ENCODE measurements at regions of chr9 and their contacts with region 1.

Region 1: GRCh38 chr9:109440797-109441287 is 57.3 kb downstream of the PTPN3 start:
- DNase-seq: no peak
- ATAC-seq: peak; percentile 89
- H3K4me3 ChIP-seq: no peak overlapping the region
- H3K27ac ChIP-seq: no peak overlapping the region
- H3K4me1 ChIP-seq: peaks cover 19% of the 10 kb centered on the region
- H3K27me3 ChIP-seq: no peaks in the 10 kb centered on the region
- CTCF ChIP-seq: peak; percentile 73 to 86 (median 85)
- EP300 ChIP-seq: 0 out of 4 replicates have a peak, but pooled peaks of 1 of the 2 experiments have one; percentile 28
- POLR2A ChIP-seq: no peak
- RAD21 ChIP-seq: peak; percentile 84

Region 2: GRCh38 chr9:109213290-109214121 is 227.3 kb before region 1 on chr9:
- CTCF ChIA-PET with region 1: no interaction called
- POLR2A ChIA-PET with region 1: no interaction called
- RAD21 ChIA-PET with region 1: no interaction called
- SMC1A ChIA-PET with region 1: no interaction called
- in situ Hi-C with region 1: no loop called
- intact Hi-C with region 1: no loop called
- DNase-seq: no peak
- ATAC-seq: no peak
- H3K4me3 ChIP-seq: no peak overlapping the region
- H3K27ac ChIP-seq: no peak overlapping the region
- H3K4me1 ChIP-seq: no peaks in the 10 kb centered on the region
- H3K27me3 ChIP-seq: no peaks in the 10 kb centered on the region; a peak in 1 of 4 replicates
- CTCF ChIP-seq: no peak
- EP300 ChIP-seq: no peak
- POLR2A ChIP-seq: no peak
- RAD21 ChIP-seq: no peak

Region 3: DNA sequence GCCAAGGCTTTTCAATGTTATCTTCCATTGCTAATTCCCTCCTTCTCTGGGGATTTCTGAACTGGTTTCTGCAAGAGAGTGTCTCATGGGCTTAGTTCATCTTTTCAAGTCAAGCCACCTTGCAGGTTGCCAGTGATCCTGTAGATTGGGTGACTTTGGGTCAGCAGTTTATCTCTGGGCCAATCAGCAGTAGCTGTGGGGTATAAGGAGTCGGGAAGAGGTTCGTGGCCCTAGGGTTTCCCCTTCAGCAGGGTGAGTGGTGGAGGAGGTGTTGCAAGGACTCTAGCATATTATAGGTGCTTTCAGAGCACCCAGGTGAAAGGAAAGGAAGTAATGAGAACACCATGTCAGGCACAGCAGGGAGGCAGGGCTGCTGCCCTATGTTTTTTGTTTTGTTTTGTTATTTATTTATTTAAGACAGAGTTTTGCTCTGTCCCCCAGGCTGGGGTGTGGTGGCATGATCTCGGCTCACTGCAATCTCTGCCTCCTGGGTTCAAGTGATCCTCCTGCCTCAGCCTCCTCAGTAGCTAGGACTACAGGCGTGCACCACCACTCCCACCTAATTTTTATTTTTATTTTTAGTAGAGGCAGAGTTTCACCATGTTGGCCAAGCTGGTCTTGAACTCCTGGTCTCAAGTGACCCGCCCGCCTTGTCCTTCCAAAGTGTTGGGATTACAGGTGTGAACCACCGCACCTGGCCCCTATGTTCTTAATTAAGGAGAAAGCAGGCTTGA is 85.5 kb before region 1 on chr9:
- CTCF ChIA-PET with region 1: no interaction called
- POLR2A ChIA-PET with region 1: no interaction called
- RAD21 ChIA-PET with region 1: no interaction called
- SMC1A ChIA-PET with region 1: no interaction called
- in situ Hi-C with region 1: no loop called
- intact Hi-C with region 1: no loop called
- DNase-seq: no peak
- ATAC-seq: no peak
- H3K4me3 ChIP-seq: no peak overlapping the region
- H3K27ac ChIP-seq: no peak overlapping the region
- H3K4me1 ChIP-seq: no peaks in the 10 kb centered on the region
- H3K27me3 ChIP-seq: no peaks in the 10 kb centered on the region
- CTCF ChIP-seq: no peak
- EP300 ChIP-seq: no peak
- POLR2A ChIP-seq: no peak
- RAD21 ChIP-seq: no peak

Region 4: GRCh38 chr9:109381011-109381729 is 59.7 kb before region 1 on chr9:
- CTCF ChIA-PET with region 1: no interaction called
- POLR2A ChIA-PET with region 1: no interaction called
- RAD21 ChIA-PET with region 1: no interaction called
- SMC1A ChIA-PET with region 1: no interaction called
- in situ Hi-C with region 1: loop called (anchors 5 kb)
- intact Hi-C with region 1: no loop called
- DNase-seq: no peak
- ATAC-seq: peak; percentile 77
- H3K4me3 ChIP-seq: no peak overlapping the region
- H3K27ac ChIP-seq: no peak overlapping the region
- H3K4me1 ChIP-seq: peaks cover 36% of the 10 kb centered on the region
- H3K27me3 ChIP-seq: peaks cover 0 to 2% of the 10 kb centered on the region in 2 experiments; a peak in 1 of 4 replicates
- CTCF ChIP-seq: no peak
- EP300 ChIP-seq: no peak
- POLR2A ChIP-seq: no peak
- RAD21 ChIP-seq: no peak

Region 5: DNA sequence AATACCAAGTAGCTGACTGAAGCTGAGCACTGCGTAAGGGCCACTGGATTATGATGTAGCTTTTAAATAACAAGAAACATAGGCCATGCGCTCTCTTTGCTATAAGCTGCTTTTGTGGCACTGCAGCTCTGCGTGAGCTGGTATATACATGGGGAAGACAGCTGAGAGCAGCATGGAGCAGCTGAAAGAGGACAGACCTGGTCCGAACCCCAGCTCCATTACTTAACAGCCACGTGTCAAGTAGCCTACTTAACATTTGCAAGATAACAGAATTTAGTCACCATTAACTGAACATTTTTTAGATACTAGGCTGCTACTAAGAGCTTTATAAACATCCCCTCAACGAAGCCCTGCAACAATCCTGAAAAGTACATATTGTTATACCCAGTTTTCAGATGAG is 12.0 kb before region 1 on chr9:
- CTCF ChIA-PET with region 1: interaction called, 214 read pairs
- POLR2A ChIA-PET with region 1: interaction called, 3 read pairs
- RAD21 ChIA-PET with region 1: interaction called, 7 read pairs
- SMC1A ChIA-PET with region 1: interaction called, 43 read pairs
- in situ Hi-C with region 1: no loop called
- intact Hi-C with region 1: no loop called
- DNase-seq: no peak
- ATAC-seq: no peak
- H3K4me3 ChIP-seq: no peak overlapping the region
- H3K27ac ChIP-seq: no peak overlapping the region
- H3K4me1 ChIP-seq: 0 out of 2 replicates have a peak, but pooled peaks cover 3% of the 10 kb centered on the region
- H3K27me3 ChIP-seq: no peaks in the 10 kb centered on the region
- CTCF ChIP-seq: no peak
- EP300 ChIP-seq: no peak
- POLR2A ChIP-seq: no peak
- RAD21 ChIP-seq: no peak

Region 6: DNA sequence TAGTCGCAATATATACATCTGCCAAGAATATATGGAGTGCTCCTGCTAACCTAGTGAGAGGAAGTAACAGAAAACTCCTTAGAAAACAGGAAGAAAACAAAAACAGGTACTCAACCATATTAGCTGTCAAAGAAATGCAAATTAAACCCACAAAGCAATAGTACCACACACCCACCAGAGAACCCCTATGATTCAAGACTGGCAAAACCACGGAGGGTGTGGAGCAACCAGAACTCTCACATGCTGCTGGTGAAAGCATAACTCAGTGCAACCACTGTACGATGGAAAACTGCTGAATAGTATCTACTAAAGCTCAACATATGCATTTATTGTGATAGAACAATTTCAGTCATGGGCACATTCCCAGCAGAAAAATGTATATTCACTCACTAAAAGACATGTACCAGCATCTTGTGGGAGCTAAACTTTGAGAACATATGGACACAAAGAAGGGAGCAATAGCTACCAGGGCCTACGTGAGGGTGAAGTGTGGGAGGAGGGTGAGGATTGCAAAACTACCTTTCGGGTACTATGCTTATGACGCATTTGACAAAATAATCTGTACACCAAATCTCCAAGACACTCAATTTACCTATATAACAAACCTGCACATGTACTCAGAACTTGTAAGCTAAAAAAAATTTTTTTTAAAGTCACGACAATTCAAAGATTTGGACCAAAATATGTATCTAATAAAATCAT is 23.2 kb after region 1 on chr9:
- CTCF ChIA-PET with region 1: interaction called, 234 read pairs
- POLR2A ChIA-PET with region 1: interaction called, 5 read pairs
- RAD21 ChIA-PET with region 1: interaction called, 135 read pairs
- SMC1A ChIA-PET with region 1: interaction called, 131 read pairs
- in situ Hi-C with region 1: no loop called
- intact Hi-C with region 1: loop called (anchors 1 kb)
- DNase-seq: peak; percentile 31
- ATAC-seq: peak; percentile 86
- H3K4me3 ChIP-seq: no peak overlapping the region
- H3K27ac ChIP-seq: no peak overlapping the region
- H3K4me1 ChIP-seq: peaks cover 4% of the 10 kb centered on the region; the same call in 1 of the 2 replicates
- H3K27me3 ChIP-seq: no peaks in the 10 kb centered on the region; a peak in 2 of 4 replicates
- CTCF ChIP-seq: no peak
- EP300 ChIP-seq: no peak
- POLR2A ChIP-seq: no peak
- RAD21 ChIP-seq: no peak

Region 7: GRCh38 chr9:109520478-109521132 is 79.8 kb after region 1 on chr9:
- CTCF ChIA-PET with region 1: interaction called, 15 read pairs
- POLR2A ChIA-PET with region 1: no interaction called
- RAD21 ChIA-PET with region 1: interaction called, 5 read pairs
- SMC1A ChIA-PET with region 1: interaction called, 6 read pairs
- in situ Hi-C with region 1: no loop called
- intact Hi-C with region 1: loop called (anchors 1 kb)
- DNase-seq: peak; percentile 27
- ATAC-seq: peak; percentile 98
- H3K4me3 ChIP-seq: no peak overlapping the region
- H3K27ac ChIP-seq: no peak overlapping the region
- H3K4me1 ChIP-seq: no peaks in the 10 kb centered on the region
- H3K27me3 ChIP-seq: no peaks in the 10 kb centered on the region; a peak in 2 of 4 replicates
- CTCF ChIP-seq: peak; percentile 90 to 93 (median 90)
- EP300 ChIP-seq: no peak
- POLR2A ChIP-seq: no peak
- RAD21 ChIP-seq: peak; percentile 86

Region 8: GRCh38 chr9:109705515-109705914 is 264.7 kb after region 1 on chr9:
- CTCF ChIA-PET with region 1: no interaction called
- POLR2A ChIA-PET with region 1: no interaction called
- RAD21 ChIA-PET with region 1: no interaction called
- SMC1A ChIA-PET with region 1: no interaction called
- in situ Hi-C with region 1: no loop called
- intact Hi-C with region 1: no loop called
- DNase-seq: no peak
- ATAC-seq: no peak
- H3K4me3 ChIP-seq: no peak overlapping the region
- H3K27ac ChIP-seq: no peak overlapping the region
- H3K4me1 ChIP-seq: no peaks in the 10 kb centered on the region
- H3K27me3 ChIP-seq: no peaks in the 10 kb centered on the region
- CTCF ChIP-seq: no peak
- EP300 ChIP-seq: no peak
- POLR2A ChIP-seq: no peak
- RAD21 ChIP-seq: no peak